HEK293T (cell line): ENCODE measurements at regions of chr2 and their contacts with region 1.

Region 1: GRCh38 chr2:137888845-137889244 is 75.4 kb upstream of the HNMT start:
- DNase-seq: peak; percentile 28

Region 2: GRCh38 chr2:137865954-137866540 is 22.8 kb before region 1 on chr2:
- CTCF ChIA-PET with region 1: interaction called, 20 read pairs
- POLR2A ChIA-PET with region 1: no interaction called
- DNase-seq: peak; percentile 45

Region 3: DNA sequence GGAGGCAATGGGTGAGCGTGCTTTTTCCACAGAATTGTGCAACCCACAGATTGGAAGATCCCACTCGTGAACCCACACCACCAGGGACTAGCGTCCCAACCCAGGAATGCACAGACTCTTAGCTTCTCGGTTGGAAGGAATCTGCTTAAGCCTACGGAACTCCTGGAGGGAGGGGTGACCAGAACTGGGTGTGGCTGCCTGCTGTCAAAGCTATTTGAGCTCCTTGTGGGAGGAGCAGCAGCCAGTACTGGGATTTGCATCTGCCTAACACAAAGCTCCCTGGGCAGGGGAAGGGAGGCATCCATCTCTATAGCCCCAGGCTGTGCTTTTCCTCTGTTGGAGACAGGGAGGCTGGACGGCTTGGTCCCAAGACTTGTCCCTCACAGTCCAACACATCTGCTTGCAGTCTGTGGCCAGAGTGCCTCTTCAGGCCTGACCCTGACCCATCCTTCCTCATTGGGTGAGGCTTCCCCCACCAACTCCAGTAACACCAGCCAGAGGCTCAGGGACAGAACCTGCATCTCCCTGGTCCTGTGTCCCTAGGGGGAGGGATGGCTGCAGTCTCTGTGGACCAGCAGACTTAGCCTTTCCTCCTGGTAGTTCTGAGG is 103.3 kb after region 1 on chr2:
- CTCF ChIA-PET with region 1: no interaction called
- POLR2A ChIA-PET with region 1: no interaction called
- DNase-seq: no peak